Sigmoid colon (tissue), 7 donors: ENCODE measurements at regions of chr5 and their contacts with region 1.

Region 1: DNA sequence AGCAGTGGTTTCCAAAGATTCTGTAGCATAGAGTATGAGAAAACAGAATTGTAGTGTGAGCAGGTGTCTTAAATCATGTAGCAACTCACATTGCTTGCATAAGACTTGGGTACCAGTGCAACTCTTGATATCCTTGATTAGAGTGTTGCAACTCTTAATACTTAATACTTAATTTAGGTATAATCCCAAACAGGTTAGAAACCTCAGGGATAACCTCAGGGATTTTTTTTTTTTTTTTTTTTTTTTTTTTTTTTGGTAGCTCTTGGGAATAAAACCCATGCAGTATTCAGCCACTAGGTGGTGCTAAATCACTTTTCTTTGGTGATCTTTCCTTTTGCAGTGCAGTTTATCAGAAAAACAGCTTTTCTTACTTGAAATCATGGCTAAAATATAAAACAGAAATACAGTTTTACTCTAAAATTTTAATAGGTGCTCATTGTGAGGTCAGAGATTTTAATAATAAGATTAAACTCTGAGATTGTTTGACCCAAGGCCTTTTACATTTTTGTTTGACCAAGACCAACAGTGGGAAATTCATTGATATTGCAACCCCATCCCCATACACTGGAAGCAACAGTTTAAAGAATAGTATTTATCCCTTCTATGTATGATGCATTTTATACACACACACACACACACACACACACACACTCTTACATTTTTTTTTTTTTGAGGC is 55.3 kb downstream of the ERAP1 start:
- DNase-seq: no peak
- H3K4me3 ChIP-seq: no peak overlapping the region
- H3K27ac ChIP-seq: peak overlapping the region in 2 of 4 donors; percentile 4 to 23
- H3K4me1 ChIP-seq: peaks cover 0 to 5% (median 4%) of the 10 kb centered on the region in 4 donors
- H3K27me3 ChIP-seq: no peaks in the 10 kb centered on the region
- CTCF ChIP-seq: peak in 3 of 4 experiments; percentile 25 to 55 (median 37)
- EP300 ChIP-seq: no peak
- POLR2A ChIP-seq: no peak

Region 2: GRCh38 chr5:96671441-96671840 is 81.0 kb before region 1 on chr5:
- intact Hi-C with region 1: no loop called
- DNase-seq: no peak
- H3K4me3 ChIP-seq: no peak overlapping the region
- H3K27ac ChIP-seq: no peak overlapping the region
- H3K4me1 ChIP-seq: peaks cover 0 to 48% (median 39%) of the 10 kb centered on the region in 4 donors
- H3K27me3 ChIP-seq: no peaks in the 10 kb centered on the region
- CTCF ChIP-seq: no peak
- EP300 ChIP-seq: no peak
- POLR2A ChIP-seq: no peak

Region 3: DNA sequence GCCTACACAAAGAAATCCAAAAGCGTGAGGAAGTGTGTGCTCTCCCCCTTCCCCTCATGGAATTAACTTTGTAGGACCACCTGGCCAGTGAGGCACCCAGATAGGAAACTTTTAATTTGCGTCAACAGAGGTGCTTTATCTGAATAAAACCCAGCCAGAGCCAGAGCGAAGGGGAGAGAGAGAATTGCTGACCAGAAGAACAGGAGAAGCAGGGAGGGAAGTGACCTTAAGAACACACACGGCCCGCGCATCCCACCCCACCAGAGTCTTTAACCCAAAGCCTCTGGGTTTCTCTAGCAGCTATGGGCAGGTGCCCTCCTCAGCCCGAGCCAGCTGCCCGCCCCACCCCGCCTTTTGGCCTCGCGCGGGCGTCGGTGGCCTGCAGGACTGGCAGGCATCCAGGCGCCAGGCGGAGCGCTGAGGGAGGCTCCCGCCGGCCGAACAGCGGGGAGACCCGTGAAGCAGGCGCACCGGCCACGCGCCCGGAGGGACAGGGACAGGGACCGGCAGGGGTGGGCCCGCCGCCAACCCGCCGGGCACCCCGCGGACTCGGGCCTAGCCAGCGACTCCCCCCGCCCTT is 54.7 kb after region 1 on chr5:
- intact Hi-C with region 1: loop called (anchors 5 kb)
- DNase-seq: peak; percentile 89
- H3K4me3 ChIP-seq: peak overlapping the region; percentile 69 to 99 (median 92)
- H3K27ac ChIP-seq: peak overlapping the region; percentile 93 to 100 (median 98)
- H3K4me1 ChIP-seq: peaks cover 0 to 30% (median 19%) of the 10 kb centered on the region in 4 donors
- H3K27me3 ChIP-seq: no peaks in the 10 kb centered on the region
- CTCF ChIP-seq: no peak
- EP300 ChIP-seq: no peak
- POLR2A ChIP-seq: no peak

Region 4: GRCh38 chr5:96876292-96876850 is 123.9 kb after region 1 on chr5 and contains the start of gene ERAP2:
- intact Hi-C with region 1: loop called (anchors 10 kb)
- DNase-seq: no peak
- H3K4me3 ChIP-seq: peak within 1 kb of the TSS; percentile 59 to 66 (median 62)
- H3K27ac ChIP-seq: peak within 1 kb of the TSS; percentile 70 to 78 (median 74)
- H3K4me1 ChIP-seq: peaks cover 0 to 15% (median 3%) of the 10 kb centered on the region in 4 donors
- H3K27me3 ChIP-seq: no peaks in the 10 kb centered on the region
- CTCF ChIP-seq: no peak
- EP300 ChIP-seq: no peak
- POLR2A ChIP-seq: no peak
- total RNA-seq, gene ERAP2: 7.7 to 10.7 (median 8.2) TPM

Region 5: GRCh38 chr5:96973532-96974401 is 221.3 kb after region 1 on chr5:
- intact Hi-C with region 1: loop called (anchors 10 kb)
- DNase-seq: no peak
- H3K4me3 ChIP-seq: no peak overlapping the region
- H3K27ac ChIP-seq: no peak overlapping the region
- H3K4me1 ChIP-seq: peaks cover 0 to 36% (median 25%) of the 10 kb centered on the region in 4 donors
- H3K27me3 ChIP-seq: no peaks in the 10 kb centered on the region
- CTCF ChIP-seq: no peak
- EP300 ChIP-seq: no peak
- POLR2A ChIP-seq: no peak

Region 6: DNA sequence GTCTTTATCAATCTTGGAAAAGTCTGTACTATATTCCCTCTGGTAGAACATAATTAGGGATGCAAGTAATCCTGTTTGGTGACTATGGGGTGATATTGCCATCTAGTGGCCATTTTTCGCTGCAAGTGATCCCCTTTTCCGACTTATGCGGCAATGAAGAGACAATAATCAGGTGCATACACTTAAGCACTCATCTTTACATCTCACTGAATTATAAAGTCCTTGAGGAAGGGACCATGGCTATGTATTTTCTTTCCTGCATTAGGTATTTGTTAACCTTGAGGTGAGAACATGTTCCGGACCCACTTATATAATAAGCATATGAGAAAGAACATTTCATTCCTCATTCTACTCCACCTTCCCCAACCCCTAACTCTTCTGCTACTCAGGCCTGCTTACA is 409.6 kb after region 1 on chr5:
- intact Hi-C with region 1: loop called (anchors 2 kb)
- DNase-seq: peak; percentile 76
- H3K4me3 ChIP-seq: no peak overlapping the region
- H3K27ac ChIP-seq: no peak overlapping the region
- H3K4me1 ChIP-seq: no peaks in the 10 kb centered on the region
- H3K27me3 ChIP-seq: no peaks in the 10 kb centered on the region
- CTCF ChIP-seq: peak; percentile 78 to 91 (median 81)
- EP300 ChIP-seq: no peak
- POLR2A ChIP-seq: no peak